T-cell (primary cell): ENCODE measurements at regions of chr22 and their contacts with region 1.

Region 1: DNA sequence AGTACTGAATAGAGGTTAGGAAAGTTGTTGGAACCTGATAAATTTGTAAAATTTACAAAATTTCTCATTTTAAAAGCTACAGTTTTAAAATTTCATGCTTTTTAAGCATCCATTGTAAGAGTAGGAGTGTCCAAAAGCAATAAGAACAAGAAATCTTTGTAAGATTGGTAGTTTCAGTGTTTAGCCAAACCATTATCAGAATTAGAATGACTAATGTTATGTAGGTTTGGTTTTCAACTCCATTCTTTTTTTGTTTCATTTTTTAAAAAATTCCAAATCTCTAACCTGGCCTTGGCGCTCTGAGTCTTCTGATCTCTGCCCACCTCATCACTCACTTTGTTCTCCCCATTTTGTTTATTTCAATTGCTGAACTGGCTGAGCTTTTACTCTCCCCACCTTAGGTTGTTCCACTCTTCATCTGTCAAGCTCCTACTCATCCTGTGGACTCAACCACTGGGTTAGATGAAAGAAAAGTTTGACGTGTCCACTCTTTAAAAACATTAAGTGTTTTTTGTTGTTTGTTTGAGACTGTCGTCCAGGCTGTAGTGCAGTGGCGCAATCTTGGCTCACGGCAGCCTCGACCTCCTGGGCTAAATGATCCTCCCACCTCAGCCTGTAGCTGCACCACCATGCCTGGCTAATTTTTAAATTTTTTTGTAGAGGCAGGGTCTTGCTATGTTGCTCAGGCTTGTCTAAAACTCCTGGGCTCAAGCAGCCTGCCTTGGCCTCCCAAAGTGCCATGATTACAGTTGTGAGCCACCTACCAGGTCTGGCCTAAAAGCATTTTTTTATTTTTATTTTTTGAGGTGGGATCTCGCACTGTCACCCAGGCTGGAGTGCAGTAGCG is 14.0 kb downstream of the EP300 start:
- DNase-seq: no peak
- ATAC-seq: peak in 2 of 4 experiments; percentile 31
- H3K4me3 ChIP-seq: no peak overlapping the region
- H3K4me3 Mint-ChIP-seq: peak overlapping the region in 2 of 3 donors; percentile 4 to 47
- H3K27ac ChIP-seq: peak overlapping the region; percentile 25
- H3K27ac Mint-ChIP-seq: peak overlapping the region; percentile 69 to 75
- H3K4me1 ChIP-seq: peaks cover 2 to 40% of the 10 kb centered on the region in 2 experiments
- H3K4me1 Mint-ChIP-seq: peaks cover 67 to 72% (median 72%) of the 10 kb centered on the region in 3 donors
- H3K27me3 ChIP-seq: no peaks in the 10 kb centered on the region
- H3K27me3 Mint-ChIP-seq: no peaks in the 10 kb centered on the region

Region 2: DNA sequence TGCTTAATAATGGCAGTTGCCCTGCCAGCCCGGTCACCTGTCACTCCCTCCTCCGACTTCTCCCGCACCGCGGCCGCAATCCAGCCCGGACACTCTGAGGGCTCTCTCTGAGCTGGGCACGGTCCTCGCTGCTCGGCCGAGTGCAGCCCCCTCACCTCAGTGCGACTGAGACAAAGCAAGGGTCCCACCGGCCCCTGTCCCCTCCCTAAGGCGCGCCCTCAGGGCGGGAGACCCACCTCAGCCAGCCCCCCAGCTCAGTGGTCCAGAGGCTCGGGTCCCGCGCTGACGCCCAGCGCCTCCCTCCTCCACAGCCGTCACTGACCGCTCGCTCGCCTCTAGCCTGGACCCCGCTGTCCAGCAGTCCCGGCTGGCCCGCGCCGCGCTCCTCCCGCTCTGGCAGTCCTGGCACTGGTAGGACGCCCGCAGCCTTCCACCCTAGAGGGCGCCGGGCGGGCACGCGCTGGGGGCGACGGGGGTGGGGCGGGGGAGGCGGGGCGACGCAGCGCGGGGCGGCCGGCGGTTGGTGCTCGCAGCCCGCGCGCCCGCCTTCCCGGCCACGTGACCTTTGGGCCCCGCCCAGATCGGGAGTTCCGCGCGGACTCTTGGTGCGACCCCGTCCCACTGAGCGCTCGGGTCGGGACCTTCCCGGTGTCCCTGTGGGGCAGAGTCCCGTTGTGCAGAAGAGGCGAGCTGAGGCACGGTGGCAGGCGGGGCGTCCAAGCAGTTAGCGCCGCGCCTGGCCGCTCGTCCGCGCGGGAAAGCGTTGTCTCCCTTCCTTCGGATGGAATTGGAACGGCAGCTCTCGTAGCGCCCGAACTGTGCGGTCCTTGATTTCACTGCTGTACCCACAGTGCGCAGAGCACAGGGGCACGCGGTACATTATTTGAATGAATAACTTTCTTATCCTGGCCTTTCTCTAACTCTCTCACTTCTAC is 91.0 kb after region 1 on chr22:
- CTCF ChIA-PET with region 1: no interaction called
- POLR2A ChIA-PET with region 1: no interaction called
- DNase-seq: peak; percentile 45 to 91 (median 70)
- ATAC-seq: peak; percentile 89 to 95 (median 94)
- H3K4me3 ChIP-seq: peak overlapping the region; percentile 86 to 87
- H3K4me3 Mint-ChIP-seq: peak overlapping the region; percentile 88 to 91 (median 89)
- H3K27ac ChIP-seq: no peak overlapping the region
- H3K27ac Mint-ChIP-seq: peak overlapping the region in 1 of 2 donors; percentile 34
- H3K4me1 ChIP-seq: peaks cover 9 to 18% of the 10 kb centered on the region in 2 experiments
- H3K4me1 Mint-ChIP-seq: peaks cover 11 to 20% (median 11%) of the 10 kb centered on the region in 3 donors
- H3K27me3 ChIP-seq: peaks cover 0 to 4% of the 10 kb centered on the region in 2 experiments
- H3K27me3 Mint-ChIP-seq: no peaks in the 10 kb centered on the region

Region 3: GRCh38 chr22:41442240-41442792 is 336.0 kb after region 1 on chr22:
- CTCF ChIA-PET with region 1: no interaction called
- POLR2A ChIA-PET with region 1: no interaction called
- DNase-seq: no peak
- ATAC-seq: no peak
- H3K4me3 ChIP-seq: no peak overlapping the region
- H3K4me3 Mint-ChIP-seq: peak overlapping the region in 2 of 3 donors; percentile 14 to 99
- H3K27ac ChIP-seq: no peak overlapping the region
- H3K27ac Mint-ChIP-seq: peak overlapping the region in 1 of 2 donors; percentile 24
- H3K4me1 ChIP-seq: peaks cover 8 to 33% of the 10 kb centered on the region in 2 experiments
- H3K4me1 Mint-ChIP-seq: peaks cover 25 to 36% (median 28%) of the 10 kb centered on the region in 3 donors
- H3K27me3 ChIP-seq: no peaks in the 10 kb centered on the region
- H3K27me3 Mint-ChIP-seq: no peaks in the 10 kb centered on the region

Region 4: GRCh38 chr22:41857155-41857859 is 751.0 kb after region 1 on chr22:
- CTCF ChIA-PET with region 1: interaction called in 1 of 2 experiments, 10 read pairs
- POLR2A ChIA-PET with region 1: no interaction called
- DNase-seq: peak; percentile 22 to 87 (median 62)
- ATAC-seq: peak; percentile 50 to 74 (median 62)
- H3K4me3 ChIP-seq: no peak overlapping the region
- H3K4me3 Mint-ChIP-seq: peak overlapping the region; percentile 1 to 39 (median 17)
- H3K27ac ChIP-seq: peak overlapping the region; percentile 42
- H3K27ac Mint-ChIP-seq: peak overlapping the region; percentile 62 to 85
- H3K4me1 ChIP-seq: peaks cover 11 to 36% of the 10 kb centered on the region in 2 experiments
- H3K4me1 Mint-ChIP-seq: peaks cover 47 to 72% (median 67%) of the 10 kb centered on the region in 3 donors
- H3K27me3 ChIP-seq: no peaks in the 10 kb centered on the region
- H3K27me3 Mint-ChIP-seq: no peaks in the 10 kb centered on the region

Region 5: GRCh38 chr22:42462016-42462415 is 1355.7 kb after region 1 on chr22:
- CTCF ChIA-PET with region 1: no interaction called
- POLR2A ChIA-PET with region 1: no interaction called
- DNase-seq: no peak
- ATAC-seq: no peak
- H3K4me3 ChIP-seq: no peak overlapping the region
- H3K4me3 Mint-ChIP-seq: no peak overlapping the region
- H3K27ac ChIP-seq: no peak overlapping the region
- H3K27ac Mint-ChIP-seq: no peak overlapping the region
- H3K4me1 ChIP-seq: no peaks in the 10 kb centered on the region
- H3K4me1 Mint-ChIP-seq: peaks cover 0 to 8% (median 0%) of the 10 kb centered on the region in 3 donors
- H3K27me3 ChIP-seq: peaks cover 0 to 37% of the 10 kb centered on the region in 2 experiments
- H3K27me3 Mint-ChIP-seq: peaks cover 22 to 40% of the 10 kb centered on the region in 2 donors